ENCODE measurements at regions of chr7 and their contacts with region 1.

Region 1: GRCh38 chr7:128343554-128344430 is at the start of gene RBM28:
- DNase-seq: peak; percentile 88
- H3K4me3 Mint-ChIP-seq: peak within 1 kb of the TSS; percentile 98
- H3K27ac Mint-ChIP-seq: peak within 1 kb of the TSS; percentile 89
- H3K4me1 Mint-ChIP-seq: peaks cover 24% of the 10 kb centered on the region
- H3K27me3 Mint-ChIP-seq: no peaks in the 10 kb centered on the region
- total RNA-seq, gene RBM28: 51.9 to 53.2 TPM

Region 2: GRCh38 chr7:127516320-127516719 is 827.5 kb before region 1 on chr7:
- CTCF ChIA-PET with region 1: no interaction called
- intact Hi-C with region 1: no loop called
- DNase-seq: no peak
- H3K4me3 Mint-ChIP-seq: no peak overlapping the region
- H3K27ac Mint-ChIP-seq: no peak overlapping the region
- H3K4me1 Mint-ChIP-seq: no peaks in the 10 kb centered on the region
- H3K27me3 Mint-ChIP-seq: peaks cover 15% of the 10 kb centered on the region

Region 3: GRCh38 chr7:127651556-127652332 is 692.0 kb before region 1 on chr7 and contains the start of gene SND1:
- CTCF ChIA-PET with region 1: no interaction called
- intact Hi-C with region 1: loop called (anchors 1 kb)
- DNase-seq: peak; percentile 99
- H3K4me3 Mint-ChIP-seq: peak within 1 kb of the TSS; percentile 99
- H3K27ac Mint-ChIP-seq: peak within 1 kb of the TSS; percentile 91
- H3K4me1 Mint-ChIP-seq: peaks cover 33% of the 10 kb centered on the region
- H3K27me3 Mint-ChIP-seq: no peaks in the 10 kb centered on the region
- total RNA-seq, gene SND1: 184 to 211 TPM

Region 4: GRCh38 chr7:128247676-128248194 is 96.1 kb before region 1 on chr7:
- CTCF ChIA-PET with region 1: no interaction called
- intact Hi-C with region 1: no loop called
- DNase-seq: no peak
- H3K4me3 Mint-ChIP-seq: no peak overlapping the region
- H3K27ac Mint-ChIP-seq: no peak overlapping the region
- H3K4me1 Mint-ChIP-seq: no peaks in the 10 kb centered on the region
- H3K27me3 Mint-ChIP-seq: peaks cover 6% of the 10 kb centered on the region

Region 5: GRCh38 chr7:128381161-128381821 is 37.5 kb after region 1 on chr7:
- CTCF ChIA-PET with region 1: interaction called, 297 read pairs
- intact Hi-C with region 1: no loop called
- DNase-seq: peak; percentile 61
- H3K4me3 Mint-ChIP-seq: no peak overlapping the region
- H3K27ac Mint-ChIP-seq: no peak overlapping the region
- H3K4me1 Mint-ChIP-seq: no peaks in the 10 kb centered on the region
- H3K27me3 Mint-ChIP-seq: no peaks in the 10 kb centered on the region

Region 6: GRCh38 chr7:128425850-128426249 is 82.1 kb after region 1 on chr7:
- CTCF ChIA-PET with region 1: interaction called, 62 read pairs
- intact Hi-C with region 1: loop called (anchors 1 kb)
- DNase-seq: peak; percentile 93
- H3K4me3 Mint-ChIP-seq: no peak overlapping the region
- H3K27ac Mint-ChIP-seq: no peak overlapping the region
- H3K4me1 Mint-ChIP-seq: no peaks in the 10 kb centered on the region
- H3K27me3 Mint-ChIP-seq: peaks cover 3% of the 10 kb centered on the region

Region 7: GRCh38 chr7:128739048-128739962 is 395.5 kb after region 1 on chr7 and contains the start of gene CALU:
- CTCF ChIA-PET with region 1: no interaction called
- intact Hi-C with region 1: loop called (anchors 2 kb)
- DNase-seq: peak; percentile 97
- H3K4me3 Mint-ChIP-seq: peak within 1 kb of the TSS; percentile 99
- H3K27ac Mint-ChIP-seq: peak within 1 kb of the TSS; percentile 96
- H3K4me1 Mint-ChIP-seq: peaks cover 43% of the 10 kb centered on the region
- H3K27me3 Mint-ChIP-seq: no peaks in the 10 kb centered on the region
- total RNA-seq, gene CALU: 33.0 to 35.4 TPM

Measured in activated naive CD4-positive, alpha-beta T cell treated with anti-CD3 and anti-CD28 coated beads for 36 hours (primary cell).